HEK293T (cell line): ENCODE measurements at regions of chr19 and their contacts with region 1.

Region 1: DNA sequence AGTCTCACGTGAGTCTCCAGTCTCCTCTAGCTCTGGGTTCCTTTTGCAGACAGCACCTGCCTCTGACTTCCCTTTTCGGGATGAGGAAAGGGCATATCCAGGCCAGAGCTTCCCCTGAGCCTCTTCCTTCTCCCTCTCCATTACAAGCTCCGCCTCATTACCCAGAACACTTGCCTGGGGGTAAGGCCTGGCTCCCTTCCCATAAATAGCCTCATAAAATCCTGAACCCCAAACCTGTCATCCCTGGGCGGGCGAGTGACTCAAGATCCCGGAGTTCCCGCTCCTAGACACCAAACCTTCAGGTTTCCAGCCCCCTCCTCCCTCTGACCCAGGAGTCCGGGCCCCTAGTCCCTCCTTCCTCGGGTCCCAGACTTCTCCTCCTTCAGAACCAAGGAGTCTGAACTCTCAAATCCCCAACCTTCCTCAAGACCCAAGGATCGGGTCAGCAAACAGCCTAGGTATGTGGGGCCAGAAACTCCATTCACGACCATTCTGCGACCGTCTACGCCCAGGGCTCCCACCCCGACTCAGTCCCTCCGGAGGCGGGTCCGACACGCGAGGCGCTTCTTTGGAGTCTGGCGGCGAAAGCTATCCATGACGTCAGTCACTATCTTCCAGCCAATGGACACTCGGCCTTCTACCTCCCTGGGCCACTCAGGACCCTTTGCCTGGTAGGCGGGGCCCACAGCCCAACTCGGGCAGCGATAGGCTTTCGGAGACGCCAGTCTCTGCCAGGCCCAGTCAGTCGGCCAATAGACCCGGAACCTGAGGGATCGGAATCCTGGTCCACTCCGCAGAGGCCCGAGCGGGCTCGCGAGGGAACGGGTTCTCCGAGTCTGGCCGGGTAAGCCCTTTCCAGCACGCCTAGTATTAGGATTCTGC is 6.5 kb upstream of the CNFN start:
- DNase-seq: peak; percentile 99

Region 2: GRCh38 chr19:42268704-42269477 is 127.7 kb before region 1 on chr19 and contains the start of gene CIC:
- CTCF ChIA-PET with region 1: no interaction called
- POLR2A ChIA-PET with region 1: no interaction called
- DNase-seq: peak; percentile 93

Region 3: DNA sequence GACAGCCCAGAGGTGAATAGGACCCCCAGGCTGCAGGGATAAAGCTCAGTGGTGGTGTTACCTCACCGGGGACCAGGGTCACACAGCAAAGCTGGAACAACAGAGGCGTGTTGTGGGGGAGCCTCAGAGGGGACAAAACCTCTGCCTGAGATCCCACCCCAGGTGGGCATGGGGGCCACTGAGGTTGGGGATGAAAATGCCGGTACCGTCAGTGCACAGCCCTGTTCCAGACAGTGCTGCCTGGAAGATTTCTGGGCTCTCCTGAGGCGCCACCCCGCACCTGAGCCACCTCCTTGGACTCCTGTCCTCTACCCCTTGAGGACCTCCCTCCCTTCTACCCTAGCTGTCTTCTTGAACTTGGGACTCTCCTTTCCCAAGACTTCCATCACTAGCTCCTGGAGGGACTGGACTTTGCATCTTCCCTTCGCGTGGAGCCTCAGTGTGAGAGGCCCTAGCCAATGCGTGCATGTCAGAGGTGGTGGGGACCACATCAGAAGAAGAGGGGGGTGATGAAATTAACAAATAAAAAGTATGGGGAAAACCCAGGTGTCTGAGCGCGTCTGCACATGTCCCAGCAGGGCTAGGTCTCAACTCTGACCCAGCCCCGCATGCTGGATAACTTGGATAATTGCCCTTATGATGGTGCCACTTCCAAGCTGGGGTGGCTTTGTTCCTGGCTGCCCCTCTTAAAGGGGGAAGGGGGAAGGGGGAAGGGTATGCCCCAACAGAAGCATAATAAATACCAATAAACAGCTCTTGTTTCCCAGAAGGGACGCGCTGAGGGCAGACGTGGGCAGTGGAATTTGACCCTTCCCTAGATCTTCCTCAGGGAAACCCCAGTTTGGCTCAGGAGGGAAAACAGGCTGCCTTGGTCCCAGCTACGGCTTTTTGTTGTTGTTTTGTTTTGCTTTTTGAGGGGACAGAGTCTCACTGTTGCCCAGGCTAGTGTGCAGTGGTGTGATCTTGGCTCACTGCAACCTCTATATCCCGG is 18.1 kb before region 1 on chr19:
- CTCF ChIA-PET with region 1: interaction called, 3 read pairs
- POLR2A ChIA-PET with region 1: interaction called, 50 read pairs
- DNase-seq: no peak

Region 4: DNA sequence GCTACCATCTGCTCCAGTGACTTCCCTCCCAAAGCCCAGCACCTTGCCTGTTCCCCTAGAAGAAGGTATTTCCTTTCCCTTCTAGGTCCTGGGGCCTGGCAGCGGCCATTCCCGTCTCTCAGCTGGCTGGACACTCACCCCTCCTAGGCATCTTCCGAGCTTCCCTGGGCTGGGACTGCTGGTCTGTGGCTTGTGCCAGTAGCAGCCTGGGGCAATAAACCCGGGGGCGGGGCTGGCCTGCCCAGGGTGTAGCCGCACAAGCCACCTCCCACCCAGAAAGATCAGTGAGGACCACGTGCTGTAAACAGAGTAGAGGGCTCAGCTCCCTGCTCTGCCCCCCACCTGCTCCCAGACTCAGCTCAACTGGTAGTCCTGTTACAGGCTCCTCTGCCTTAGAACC is 15.6 kb after region 1 on chr19:
- CTCF ChIA-PET with region 1: interaction called, 4 read pairs
- POLR2A ChIA-PET with region 1: interaction called, 24 read pairs
- DNase-seq: no peak

Region 5: GRCh38 chr19:42423462-42424344 is 27.1 kb after region 1 on chr19:
- CTCF ChIA-PET with region 1: interaction called, 3 read pairs
- POLR2A ChIA-PET with region 1: interaction called, 13 read pairs
- DNase-seq: peak; percentile 82